ENCODE measurements at regions of chr19 and their contacts with region 1.

Region 1: GRCh38 chr19:45059278-45059965 is 16.9 kb downstream of the ZNF296 start:
- DNase-seq: peak; percentile 82 to 89
- H3K4me3 ChIP-seq: no peak overlapping the region
- H3K4me3 Mint-ChIP-seq: no peak overlapping the region
- H3K27ac Mint-ChIP-seq: no peak overlapping the region
- H3K4me1 ChIP-seq: no peaks in the 10 kb centered on the region
- H3K4me1 Mint-ChIP-seq: peaks cover 8% of the 10 kb centered on the region
- H3K27me3 ChIP-seq: no peaks in the 10 kb centered on the region
- H3K27me3 Mint-ChIP-seq: no peaks in the 10 kb centered on the region
- CTCF ChIP-seq: peak; percentile 90 to 95

Region 2: DNA sequence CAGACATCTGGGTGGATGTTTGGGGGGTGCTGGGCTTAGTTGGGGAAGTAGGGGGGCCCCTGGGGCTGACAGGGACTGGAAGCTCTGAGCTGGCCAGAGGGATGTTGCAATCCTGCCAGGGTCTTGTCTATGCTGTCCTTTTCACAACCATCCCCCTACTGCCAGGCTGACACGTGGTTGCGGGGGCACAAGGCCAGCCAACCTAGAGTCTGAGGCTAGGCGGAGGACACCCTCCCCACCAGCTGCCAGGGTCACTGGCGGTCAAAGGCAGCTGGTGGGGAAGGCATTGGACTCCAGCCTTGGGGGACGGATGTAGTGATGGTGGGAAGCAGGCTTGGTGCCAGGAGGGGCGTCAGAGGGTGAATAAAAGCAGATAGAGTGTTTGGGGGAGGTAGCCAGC is 146.6 kb before region 1 on chr19:
- CTCF ChIA-PET with region 1: no interaction called
- POLR2A ChIA-PET with region 1: interaction called, 11 read pairs
- intact Hi-C with region 1: no loop called
- DNase-seq: no peak
- H3K4me3 ChIP-seq: no peak overlapping the region
- H3K4me3 Mint-ChIP-seq: no peak overlapping the region
- H3K27ac Mint-ChIP-seq: no peak overlapping the region
- H3K4me1 ChIP-seq: peaks cover 18% of the 10 kb centered on the region
- H3K4me1 Mint-ChIP-seq: peaks cover 51% of the 10 kb centered on the region
- H3K27me3 ChIP-seq: no peaks in the 10 kb centered on the region
- H3K27me3 Mint-ChIP-seq: no peaks in the 10 kb centered on the region
- CTCF ChIP-seq: no peak

Region 3: GRCh38 chr19:44988896-44989556 is 70.4 kb before region 1 on chr19:
- CTCF ChIA-PET with region 1: interaction called, 15 read pairs
- POLR2A ChIA-PET with region 1: no interaction called
- intact Hi-C with region 1: loop called (anchors 1 kb)
- DNase-seq: peak in 1 of 2 experiments; percentile 70
- H3K4me3 ChIP-seq: no peak overlapping the region
- H3K4me3 Mint-ChIP-seq: no peak overlapping the region
- H3K27ac Mint-ChIP-seq: no peak overlapping the region
- H3K4me1 ChIP-seq: no peaks in the 10 kb centered on the region
- H3K4me1 Mint-ChIP-seq: no peaks in the 10 kb centered on the region
- H3K27me3 ChIP-seq: no peaks in the 10 kb centered on the region
- H3K27me3 Mint-ChIP-seq: no peaks in the 10 kb centered on the region
- CTCF ChIP-seq: peak; percentile 59 to 74

Region 4: GRCh38 chr19:45016388-45017319 is 42.8 kb before region 1 on chr19:
- CTCF ChIA-PET with region 1: interaction called, 7 read pairs
- POLR2A ChIA-PET with region 1: no interaction called
- intact Hi-C with region 1: loop called (anchors 1 kb)
- DNase-seq: peak; percentile 76 to 88
- H3K4me3 ChIP-seq: no peak overlapping the region
- H3K4me3 Mint-ChIP-seq: no peak overlapping the region
- H3K27ac Mint-ChIP-seq: no peak overlapping the region
- H3K4me1 ChIP-seq: no peaks in the 10 kb centered on the region
- H3K4me1 Mint-ChIP-seq: no peaks in the 10 kb centered on the region
- H3K27me3 ChIP-seq: no peaks in the 10 kb centered on the region
- H3K27me3 Mint-ChIP-seq: no peaks in the 10 kb centered on the region
- CTCF ChIP-seq: peak; percentile 73 to 83

Region 5: GRCh38 chr19:45045671-45046353 is 13.6 kb before region 1 on chr19:
- CTCF ChIA-PET with region 1: interaction called, 26 read pairs
- POLR2A ChIA-PET with region 1: interaction called, 4 read pairs
- intact Hi-C with region 1: loop called (anchors 2 kb)
- DNase-seq: peak; percentile 53 to 65
- H3K4me3 ChIP-seq: no peak overlapping the region
- H3K4me3 Mint-ChIP-seq: peak overlapping the region; percentile 58
- H3K27ac Mint-ChIP-seq: peak overlapping the region; percentile 75
- H3K4me1 ChIP-seq: peaks cover 26% of the 10 kb centered on the region
- H3K4me1 Mint-ChIP-seq: peaks cover 24% of the 10 kb centered on the region
- H3K27me3 ChIP-seq: no peaks in the 10 kb centered on the region
- H3K27me3 Mint-ChIP-seq: no peaks in the 10 kb centered on the region
- CTCF ChIP-seq: no peak

Measured in Caco-2 (cell line).